CD8-positive, alpha-beta T cell (primary cell): ENCODE measurements at regions of chr14 and their contacts with region 1.

Region 1: DNA sequence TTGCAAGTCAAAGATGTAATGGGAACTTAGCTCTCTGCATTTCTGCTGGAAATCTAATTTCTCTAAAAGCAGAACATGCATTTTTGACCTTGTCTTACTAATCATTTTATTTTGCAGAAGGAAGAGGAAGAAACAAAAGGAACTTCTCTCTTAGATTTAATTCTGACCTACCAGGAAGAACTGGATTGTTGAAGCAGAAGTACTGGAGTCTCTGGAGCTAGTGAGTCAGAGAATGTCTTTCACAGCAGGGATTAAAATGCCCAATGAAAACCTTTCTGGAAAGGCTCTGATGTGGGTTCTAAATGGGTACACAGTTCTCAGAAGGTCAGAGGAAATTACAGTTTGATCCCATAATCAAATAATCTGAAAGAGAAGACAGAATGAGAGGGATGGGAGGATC is 70.8 kb upstream of the GNG2 start:
- DNase-seq: no peak
- ATAC-seq: no peak
- H3K4me3 ChIP-seq: no peak overlapping the region
- H3K4me3 Mint-ChIP-seq: no peak overlapping the region
- H3K27ac ChIP-seq: no peak overlapping the region
- H3K27ac Mint-ChIP-seq: no peak overlapping the region
- H3K4me1 ChIP-seq: no peaks in the 10 kb centered on the region
- H3K4me1 Mint-ChIP-seq: no peaks in the 10 kb centered on the region
- H3K27me3 ChIP-seq: peaks cover 0 to 2% of the 10 kb centered on the region in 2 experiments
- H3K27me3 Mint-ChIP-seq: peaks cover 11% of the 10 kb centered on the region
- CTCF ChIP-seq: no peak

Region 2: DNA sequence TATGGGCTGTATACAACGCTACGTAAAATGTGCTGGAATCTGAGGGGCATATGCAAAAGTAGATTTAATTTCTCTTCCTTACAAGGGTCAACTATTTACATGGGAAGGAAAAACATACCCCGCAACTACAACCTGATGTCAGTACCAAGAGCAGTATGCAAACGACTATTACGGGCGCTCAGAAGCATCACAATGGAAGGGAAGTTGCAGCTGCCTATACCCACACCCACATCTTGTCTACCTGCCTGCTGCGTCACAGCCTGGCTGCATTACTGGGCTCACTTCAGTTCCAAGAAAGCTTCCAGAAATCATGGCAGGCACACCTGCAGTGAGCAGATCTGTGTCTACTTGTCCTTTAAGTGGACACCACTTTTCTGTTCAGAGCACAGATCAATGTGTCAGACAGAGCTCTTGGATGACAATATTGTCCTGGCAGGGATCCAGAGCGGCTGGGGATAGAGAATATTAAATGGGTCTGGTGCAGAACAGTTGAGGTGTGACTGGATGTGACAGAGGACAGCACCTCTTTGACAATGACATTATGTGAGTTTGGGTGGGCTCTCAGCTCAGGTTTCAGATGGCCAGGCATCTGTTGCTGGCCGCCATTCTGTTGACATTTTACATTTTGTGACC is 29.3 kb after region 1 on chr14:
- CTCF ChIA-PET with region 1: no interaction called
- POLR2A ChIA-PET with region 1: no interaction called
- intact Hi-C with region 1: loop called in 1 of 2 experiments (anchors 1 kb)
- DNase-seq: no peak
- ATAC-seq: no peak
- H3K4me3 ChIP-seq: no peak overlapping the region
- H3K4me3 Mint-ChIP-seq: no peak overlapping the region
- H3K27ac ChIP-seq: no peak overlapping the region
- H3K27ac Mint-ChIP-seq: no peak overlapping the region
- H3K4me1 ChIP-seq: no peaks in the 10 kb centered on the region
- H3K4me1 Mint-ChIP-seq: no peaks in the 10 kb centered on the region
- H3K27me3 ChIP-seq: no peaks in the 10 kb centered on the region
- H3K27me3 Mint-ChIP-seq: peaks cover 5% of the 10 kb centered on the region
- CTCF ChIP-seq: no peak